Activated CD4-positive, alpha-beta T cell treated with anti-CD3 and anti-CD28 coated beads, Interleukin-2, amount 10 ng/mL, durations not matched to agents 7 days and 5 days (primary cell): ENCODE measurements at regions of chr11 and their contacts with region 1.

Region 1: DNA sequence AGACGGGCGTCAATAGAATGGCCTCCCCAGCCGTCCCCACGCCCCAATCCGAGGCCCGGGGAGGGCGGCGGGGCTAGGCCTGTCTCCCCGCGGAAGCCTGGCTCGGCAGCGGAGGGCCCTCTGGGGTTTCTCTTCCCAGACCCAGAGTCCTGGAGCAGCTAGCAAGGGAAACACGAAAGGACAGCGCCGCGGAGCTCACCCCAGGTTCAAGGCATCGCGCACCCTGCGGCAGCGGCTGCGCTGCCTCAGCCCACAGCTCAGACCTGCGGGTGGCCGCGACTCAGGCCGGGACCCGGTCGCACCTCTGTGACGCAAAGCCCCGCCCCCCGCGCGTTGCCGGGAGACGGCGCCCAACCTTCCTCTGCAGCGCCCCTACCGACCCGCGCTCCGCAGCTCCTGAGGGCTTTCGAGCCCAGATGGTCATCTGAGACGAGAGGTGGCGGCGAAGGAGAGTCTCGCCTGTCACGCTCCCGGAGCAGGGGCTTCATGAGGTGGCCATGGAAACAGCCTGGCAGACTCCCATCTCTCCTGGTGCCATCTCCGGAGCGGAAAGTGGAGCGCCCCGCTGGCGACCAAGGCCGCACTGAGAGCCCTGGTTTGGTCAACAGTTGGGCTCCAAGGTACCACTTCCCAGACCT is at the start of gene RNF141:
- DNase-seq: peak; percentile 94
- H3K4me3 Mint-ChIP-seq: peak within 1 kb of the TSS; percentile 89
- H3K27ac Mint-ChIP-seq: peak within 1 kb of the TSS; percentile 86
- H3K4me1 Mint-ChIP-seq: peaks cover 20% of the 10 kb centered on the region
- H3K27me3 Mint-ChIP-seq: no peaks in the 10 kb centered on the region
- total RNA-seq, gene RNF141: 10.3 to 11.6 TPM

Region 2: DNA sequence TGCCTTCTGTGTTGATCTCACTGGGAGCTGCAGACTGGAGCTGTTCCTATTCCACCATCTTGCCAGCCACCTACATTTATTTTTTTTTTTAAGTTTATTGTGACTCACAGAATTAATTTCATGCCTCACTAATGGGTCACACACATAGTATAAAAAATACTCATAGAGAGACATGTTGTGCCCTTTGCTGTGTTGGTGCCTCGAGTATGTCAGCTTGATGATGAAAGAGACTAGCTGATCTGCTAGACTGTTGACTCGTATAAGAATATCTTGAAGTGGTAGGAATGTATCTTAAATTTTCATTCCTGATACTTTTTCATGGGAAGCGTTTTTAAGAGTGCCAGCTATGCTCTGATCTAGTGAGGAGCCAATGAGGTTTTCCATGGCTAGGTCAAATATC is 114.6 kb before region 1 on chr11:
- CTCF ChIA-PET with region 1: no interaction called
- POLR2A ChIA-PET with region 1: no interaction called
- DNase-seq: no peak
- H3K4me3 Mint-ChIP-seq: no peak overlapping the region
- H3K27ac Mint-ChIP-seq: no peak overlapping the region
- H3K4me1 Mint-ChIP-seq: no peaks in the 10 kb centered on the region
- H3K27me3 Mint-ChIP-seq: peaks cover 39% of the 10 kb centered on the region

Region 3: DNA sequence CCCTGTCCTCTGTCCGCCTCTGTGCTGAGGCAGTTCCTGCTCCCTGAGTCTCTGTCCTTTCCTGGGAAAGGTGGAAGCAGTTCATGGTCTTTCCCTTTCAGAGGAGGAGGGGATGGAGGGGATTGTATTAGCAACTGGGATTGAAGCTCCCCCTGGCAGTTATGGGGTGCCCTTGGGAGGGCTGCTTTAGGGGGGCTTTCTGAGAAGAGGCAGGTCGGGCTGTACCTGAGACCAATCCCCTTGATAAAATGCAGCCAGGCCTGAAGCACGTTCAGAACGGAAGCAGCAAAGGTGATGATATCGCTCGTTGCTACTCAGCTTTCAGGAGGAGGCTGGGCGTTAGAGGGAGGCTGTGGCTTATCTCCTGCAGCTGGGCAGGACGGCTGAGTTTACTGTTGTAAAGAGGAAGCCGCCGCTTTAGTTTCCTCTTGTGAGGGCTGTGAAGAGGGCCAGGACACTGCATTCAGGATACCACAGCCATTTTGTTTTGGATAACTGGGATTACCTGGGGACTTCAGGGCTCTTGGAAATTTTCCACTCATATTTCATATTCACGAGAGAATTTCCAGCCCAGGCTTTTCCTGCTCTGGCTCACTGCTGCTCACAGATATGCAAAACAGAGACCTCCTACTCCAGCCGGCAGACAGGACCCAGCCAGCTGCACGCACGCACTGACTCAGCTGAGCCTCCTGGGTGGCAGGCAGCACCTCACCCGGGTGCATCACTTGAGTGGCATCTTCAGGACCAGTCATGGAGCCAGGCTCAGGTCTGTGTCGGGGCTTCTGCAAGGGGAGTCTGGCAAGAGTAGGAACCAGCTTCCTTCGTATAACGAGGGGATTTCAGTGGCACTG is 85.2 kb before region 1 on chr11:
- CTCF ChIA-PET with region 1: interaction called, 12 read pairs
- POLR2A ChIA-PET with region 1: no interaction called
- DNase-seq: peak; percentile 87
- H3K4me3 Mint-ChIP-seq: peak overlapping the region; percentile 85
- H3K27ac Mint-ChIP-seq: peak overlapping the region; percentile 93
- H3K4me1 Mint-ChIP-seq: peaks cover 74% of the 10 kb centered on the region
- H3K27me3 Mint-ChIP-seq: no peaks in the 10 kb centered on the region

Region 4: DNA sequence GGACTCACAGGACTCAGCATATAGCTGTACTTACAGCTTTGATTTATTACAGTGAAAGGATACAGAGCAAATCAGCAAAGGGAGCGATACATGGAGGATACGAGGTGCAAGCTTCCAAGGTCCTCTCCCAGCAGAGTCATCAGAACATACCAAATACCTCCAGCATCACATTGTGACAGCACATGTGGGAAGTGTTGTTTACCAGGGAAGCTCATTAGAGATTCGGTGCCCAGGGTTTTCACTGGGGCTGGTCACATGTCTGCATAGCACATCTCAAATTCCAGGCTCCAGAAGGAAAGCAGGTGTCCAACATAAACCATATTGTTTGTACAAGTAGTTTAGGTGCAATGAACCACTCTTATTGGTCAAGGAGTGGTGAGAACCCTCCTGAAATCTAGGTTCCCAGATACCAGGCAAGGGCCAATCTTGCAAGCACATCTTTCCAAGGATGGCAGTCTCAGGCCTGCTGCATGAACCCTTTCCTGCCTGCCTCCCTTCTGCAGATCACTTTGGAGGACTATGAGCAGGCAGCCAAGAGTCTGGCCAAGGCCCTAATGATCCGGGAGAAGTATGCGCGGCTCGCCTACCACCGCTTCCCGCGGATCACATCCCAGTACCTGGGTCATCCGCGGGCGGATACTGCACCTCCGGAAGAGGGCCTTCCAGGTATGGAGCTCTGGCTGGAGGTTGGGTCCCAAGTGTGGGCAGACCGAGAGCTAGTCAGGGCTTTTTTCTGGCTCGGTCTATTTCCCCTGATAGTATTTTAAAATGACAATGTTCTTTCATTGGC is 59.3 kb before region 1 on chr11:
- CTCF ChIA-PET with region 1: no interaction called
- POLR2A ChIA-PET with region 1: no interaction called
- DNase-seq: no peak
- H3K4me3 Mint-ChIP-seq: no peak overlapping the region
- H3K27ac Mint-ChIP-seq: no peak overlapping the region
- H3K4me1 Mint-ChIP-seq: peaks cover 4% of the 10 kb centered on the region
- H3K27me3 Mint-ChIP-seq: no peaks in the 10 kb centered on the region

Region 5: GRCh38 chr11:10494636-10495463 is 46.2 kb before region 1 on chr11:
- CTCF ChIA-PET with region 1: no interaction called
- POLR2A ChIA-PET with region 1: no interaction called
- DNase-seq: no peak
- H3K4me3 Mint-ChIP-seq: no peak overlapping the region
- H3K27ac Mint-ChIP-seq: no peak overlapping the region
- H3K4me1 Mint-ChIP-seq: no peaks in the 10 kb centered on the region
- H3K27me3 Mint-ChIP-seq: no peaks in the 10 kb centered on the region

Region 6: DNA sequence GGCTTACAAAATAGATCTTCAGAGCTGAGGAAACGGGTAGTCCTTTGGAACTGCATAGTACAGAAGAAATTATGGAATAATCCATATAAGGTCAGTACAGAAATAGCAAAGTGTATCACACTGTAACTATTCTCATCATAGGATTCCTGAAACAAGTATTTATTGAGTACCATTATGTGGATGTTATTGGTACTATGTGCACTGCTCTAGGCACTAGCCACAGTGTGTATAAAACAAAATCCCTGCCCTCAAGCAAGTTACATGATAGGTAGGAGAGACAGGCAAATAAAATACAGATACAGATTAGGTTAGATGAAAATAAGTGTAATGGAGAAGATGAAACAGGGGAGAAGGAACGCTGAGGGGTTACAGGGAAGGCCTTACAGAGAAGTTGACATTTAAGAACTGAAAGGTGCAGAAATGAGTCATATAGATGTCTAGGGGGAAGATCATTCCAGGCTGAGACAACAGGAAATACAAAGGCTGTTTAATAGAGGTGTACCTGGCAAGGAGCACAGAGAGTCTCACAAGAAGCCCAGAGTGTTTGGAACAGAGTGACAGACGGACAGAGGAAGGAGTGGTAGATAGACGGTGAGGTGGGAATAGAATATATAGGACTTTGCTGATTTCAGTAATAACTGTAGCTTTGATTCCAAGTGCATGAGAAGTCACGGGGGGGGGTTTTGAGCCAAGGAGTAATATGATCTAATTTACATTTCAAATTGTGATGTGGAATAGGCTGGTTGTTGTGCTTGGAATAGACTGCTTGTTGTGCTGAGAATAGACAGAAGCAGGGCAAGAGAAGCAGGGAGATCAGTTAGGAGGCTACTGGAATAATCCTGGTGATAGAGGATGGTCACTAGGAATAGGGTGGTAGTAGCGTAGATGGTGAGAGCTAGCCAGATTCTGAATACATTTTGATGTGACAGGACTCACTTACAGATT is 13.8 kb before region 1 on chr11:
- CTCF ChIA-PET with region 1: interaction called, 18 read pairs
- POLR2A ChIA-PET with region 1: no interaction called
- DNase-seq: no peak
- H3K4me3 Mint-ChIP-seq: no peak overlapping the region
- H3K27ac Mint-ChIP-seq: no peak overlapping the region
- H3K4me1 Mint-ChIP-seq: peaks cover 13% of the 10 kb centered on the region
- H3K27me3 Mint-ChIP-seq: no peaks in the 10 kb centered on the region

Region 7: GRCh38 chr11:10556590-10556989 is 15.5 kb after region 1 on chr11:
- CTCF ChIA-PET with region 1: interaction called, 10 read pairs
- POLR2A ChIA-PET with region 1: no interaction called
- DNase-seq: no peak
- H3K4me3 Mint-ChIP-seq: no peak overlapping the region
- H3K27ac Mint-ChIP-seq: peak overlapping the region; percentile 57
- H3K4me1 Mint-ChIP-seq: no peaks in the 10 kb centered on the region
- H3K27me3 Mint-ChIP-seq: peaks cover 18% of the 10 kb centered on the region

Region 8: DNA sequence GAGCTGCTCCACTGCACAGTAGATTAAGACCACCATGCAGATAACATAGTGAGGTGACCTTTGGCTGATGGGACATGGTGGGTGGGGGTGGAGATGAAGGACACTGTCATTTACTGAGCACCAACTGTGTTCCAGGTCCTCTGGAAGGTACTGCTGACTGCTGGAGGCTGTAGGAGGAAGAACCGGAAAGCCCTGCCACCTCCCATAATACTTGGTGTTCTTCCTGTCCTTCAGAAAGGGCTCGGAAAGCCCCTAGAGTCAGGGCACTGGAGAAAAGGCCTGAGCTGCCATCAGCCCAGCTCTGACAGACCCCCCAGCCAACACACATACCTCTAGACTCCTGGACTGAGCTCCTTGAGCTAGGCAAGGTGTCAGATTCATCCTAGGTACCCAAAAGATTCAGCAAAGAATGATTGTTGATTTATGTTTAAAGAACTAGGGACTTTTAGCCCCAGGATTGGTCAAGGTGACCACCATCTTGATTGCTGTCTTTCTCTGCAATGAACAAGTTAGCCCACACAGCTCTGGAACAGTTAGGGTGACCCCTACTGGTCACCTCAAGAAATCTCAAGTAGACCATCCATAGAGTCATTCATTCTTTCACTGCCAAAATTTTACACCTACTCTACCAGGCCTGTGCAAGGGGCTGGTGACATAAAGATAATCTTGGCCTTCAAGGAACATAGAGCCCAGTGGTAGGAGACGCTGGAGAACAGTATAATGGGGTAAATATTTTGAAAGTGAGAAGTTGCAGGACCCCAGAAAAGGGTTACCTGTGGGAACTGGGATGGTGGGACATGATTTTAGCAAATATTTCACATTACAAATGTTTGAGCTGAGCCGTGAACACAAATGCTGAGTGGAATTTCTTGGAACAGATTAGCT is 113.1 kb after region 1 on chr11:
- CTCF ChIA-PET with region 1: interaction called, 13 read pairs
- POLR2A ChIA-PET with region 1: no interaction called
- DNase-seq: peak; percentile 53
- H3K4me3 Mint-ChIP-seq: no peak overlapping the region
- H3K27ac Mint-ChIP-seq: no peak overlapping the region
- H3K4me1 Mint-ChIP-seq: peaks cover 22% of the 10 kb centered on the region
- H3K27me3 Mint-ChIP-seq: no peaks in the 10 kb centered on the region

Region 9: DNA sequence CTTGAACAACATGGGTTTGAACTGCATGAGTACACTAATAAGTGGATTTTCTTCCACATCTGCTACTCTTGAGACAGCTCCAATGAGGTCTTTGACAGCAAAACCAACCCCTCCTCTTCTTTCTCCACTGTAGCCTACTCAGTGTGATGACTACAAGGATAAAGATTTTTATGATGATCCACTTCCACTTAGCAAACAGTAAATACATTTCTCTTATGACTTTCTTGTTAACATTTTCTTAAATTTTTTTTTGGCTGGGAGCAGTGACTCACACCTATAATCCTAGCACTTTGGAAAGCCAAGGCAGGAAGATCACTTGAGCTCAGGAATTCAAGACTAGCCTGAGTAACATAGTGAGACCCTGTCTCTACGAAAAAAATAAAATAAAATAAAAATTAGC is 277.6 kb after region 1 on chr11:
- CTCF ChIA-PET with region 1: no interaction called
- POLR2A ChIA-PET with region 1: no interaction called
- DNase-seq: no peak
- H3K4me3 Mint-ChIP-seq: no peak overlapping the region
- H3K27ac Mint-ChIP-seq: no peak overlapping the region
- H3K4me1 Mint-ChIP-seq: peaks cover 8% of the 10 kb centered on the region
- H3K27me3 Mint-ChIP-seq: peaks cover 8% of the 10 kb centered on the region